ENCODE measurements at regions of chr1 and their contacts with region 1.

Region 1: GRCh38 chr1:206865013-206865671 is at the start of gene IL20:
- DNase-seq: peak; percentile 68
- H3K4me3 Mint-ChIP-seq: no peak within 1 kb of the TSS
- H3K27ac Mint-ChIP-seq: no peak within 1 kb of the TSS
- H3K4me1 Mint-ChIP-seq: peaks cover 7% of the 10 kb centered on the region
- H3K27me3 Mint-ChIP-seq: peaks cover 39% of the 10 kb centered on the region
- total RNA-seq, gene IL20: not detected in 2 replicates

Region 2: GRCh38 chr1:206489980-206490770 is 375.0 kb before region 1 on chr1:
- intact Hi-C with region 1: no loop called
- DNase-seq: peak; percentile 43
- H3K4me3 Mint-ChIP-seq: no peak overlapping the region
- H3K27ac Mint-ChIP-seq: peak overlapping the region; percentile 70
- H3K4me1 Mint-ChIP-seq: peaks cover 13% of the 10 kb centered on the region
- H3K27me3 Mint-ChIP-seq: no peaks in the 10 kb centered on the region

Region 3: GRCh38 chr1:206714331-206715058 is 150.6 kb before region 1 on chr1:
- intact Hi-C with region 1: no loop called
- DNase-seq: no peak
- H3K4me3 Mint-ChIP-seq: no peak overlapping the region
- H3K27ac Mint-ChIP-seq: peak overlapping the region; percentile 74
- H3K4me1 Mint-ChIP-seq: peaks cover 83% of the 10 kb centered on the region
- H3K27me3 Mint-ChIP-seq: no peaks in the 10 kb centered on the region

Region 4: GRCh38 chr1:206725109-206725963 is 139.8 kb before region 1 on chr1:
- intact Hi-C with region 1: loop called (anchors 2 kb)
- DNase-seq: peak; percentile 37
- H3K4me3 Mint-ChIP-seq: no peak overlapping the region
- H3K27ac Mint-ChIP-seq: peak overlapping the region; percentile 7
- H3K4me1 Mint-ChIP-seq: peaks cover 63% of the 10 kb centered on the region
- H3K27me3 Mint-ChIP-seq: no peaks in the 10 kb centered on the region

Region 5: GRCh38 chr1:207910591-207911354 is 1045.6 kb after region 1 on chr1 and contains the start of gene CD34:
- intact Hi-C with region 1: no loop called
- DNase-seq: no peak
- H3K4me3 Mint-ChIP-seq: peak within 1 kb of the TSS; percentile 40
- H3K27ac Mint-ChIP-seq: no peak within 1 kb of the TSS
- H3K4me1 Mint-ChIP-seq: peaks cover 19% of the 10 kb centered on the region
- H3K27me3 Mint-ChIP-seq: peaks cover 66% of the 10 kb centered on the region
- total RNA-seq, gene CD34: not detected in 2 replicates

Measured in activated T-helper 1 cell treated with anti-CD3 and anti-CD28 coated beads, Interleukin-12 subunit alpha, Interleukin-12 subunit beta, Interleukin-2, Interleukin-4 antibody, amounts not matched to agents 30 ng/mL and 10 ng/mL and 1 ng/mL, durations not matched to agents 14 hours and 24 hours and 36 hours (primary cell).